ENCODE measurements at regions of chr15 and their contacts with region 1.

Region 1: DNA sequence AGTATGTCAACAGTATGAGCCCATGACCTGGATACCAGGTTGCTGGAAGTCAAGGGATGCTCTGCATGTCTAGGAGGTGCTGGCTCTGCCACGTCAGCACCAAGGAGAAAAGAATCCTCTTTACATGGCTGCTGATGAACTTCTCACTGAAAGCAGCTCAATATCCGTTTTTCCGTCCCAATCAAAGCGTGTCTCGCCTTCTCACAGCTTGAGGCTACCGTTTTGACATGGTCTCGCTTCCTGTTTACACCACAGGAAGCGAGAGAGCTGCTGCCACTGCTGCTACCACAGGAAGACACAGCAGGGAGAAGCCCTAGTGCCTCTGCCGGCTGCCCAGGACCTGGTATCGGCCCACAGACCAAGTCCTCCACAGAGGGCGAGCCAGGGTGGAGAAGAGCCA is 27.3 kb downstream of the STARD5 start:
- DNase-seq: peak; percentile 89
- H3K4me3 Mint-ChIP-seq: peak overlapping the region; percentile 99
- H3K27ac Mint-ChIP-seq: peak overlapping the region; percentile 99
- H3K4me1 Mint-ChIP-seq: peaks cover 80% of the 10 kb centered on the region
- H3K27me3 Mint-ChIP-seq: no peaks in the 10 kb centered on the region

Region 2: DNA sequence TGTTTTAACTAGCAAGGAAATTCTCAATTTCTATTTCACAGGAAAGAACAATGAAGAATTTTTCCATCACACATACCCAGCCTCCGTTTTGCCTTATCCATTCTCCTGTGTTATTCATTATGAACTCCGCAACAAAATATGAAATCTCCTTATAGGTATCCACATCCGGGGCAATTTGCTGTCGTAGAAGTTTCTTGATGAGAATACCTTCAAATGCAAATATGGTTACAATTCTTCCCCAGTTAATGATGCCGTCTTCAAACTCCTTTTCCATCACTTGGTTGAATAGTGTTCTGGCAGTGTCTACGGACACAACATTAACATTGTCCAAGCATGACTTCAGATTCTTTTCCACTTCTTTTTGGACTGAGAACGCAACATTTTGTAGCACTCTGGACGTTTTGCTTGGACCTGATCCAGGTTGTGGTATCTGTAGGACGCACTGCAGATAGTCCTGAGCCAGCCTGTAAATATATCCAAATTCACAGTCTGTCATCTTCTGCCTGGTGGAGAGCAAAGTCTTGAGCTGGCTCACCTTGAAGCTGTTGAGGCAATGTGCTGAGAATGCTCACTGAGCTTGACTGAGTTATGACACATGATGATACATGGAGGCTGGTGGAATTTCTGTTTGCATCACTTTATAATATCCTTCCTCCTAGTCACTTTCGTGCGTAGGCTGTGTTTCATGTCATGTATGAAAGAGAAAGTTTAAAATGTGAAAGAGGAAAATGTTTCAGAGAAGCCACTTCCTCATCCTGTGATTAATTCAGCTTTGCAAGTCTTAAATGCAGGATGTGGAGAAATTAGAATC is 1325.8 kb before region 1 on chr15 and contains the start of gene BCL2A1:
- CTCF ChIA-PET with region 1: no interaction called
- POLR2A ChIA-PET with region 1: no interaction called
- intact Hi-C with region 1: loop called (anchors 10 kb)
- DNase-seq: peak; percentile 88
- H3K4me3 Mint-ChIP-seq: peak within 1 kb of the TSS; percentile 96
- H3K27ac Mint-ChIP-seq: peak within 1 kb of the TSS; percentile 99
- H3K4me1 Mint-ChIP-seq: peaks cover 49% of the 10 kb centered on the region
- H3K27me3 Mint-ChIP-seq: no peaks in the 10 kb centered on the region
- total RNA-seq, gene BCL2A1: 110 to 111 TPM

Region 3: GRCh38 chr15:80804965-80805495 is 491.6 kb before region 1 on chr15:
- CTCF ChIA-PET with region 1: no interaction called
- POLR2A ChIA-PET with region 1: no interaction called
- intact Hi-C with region 1: loop called (anchors 10 kb)
- DNase-seq: peak; percentile 46
- H3K4me3 Mint-ChIP-seq: peak overlapping the region; percentile 11
- H3K27ac Mint-ChIP-seq: peak overlapping the region; percentile 55
- H3K4me1 Mint-ChIP-seq: peaks cover 26% of the 10 kb centered on the region
- H3K27me3 Mint-ChIP-seq: no peaks in the 10 kb centered on the region

Region 4: GRCh38 chr15:81023483-81024264 is 273.0 kb before region 1 on chr15:
- CTCF ChIA-PET with region 1: interaction called, 3 read pairs
- POLR2A ChIA-PET with region 1: interaction called, 4 read pairs
- intact Hi-C with region 1: loop called (anchors 1 kb)
- DNase-seq: peak; percentile 55
- H3K4me3 Mint-ChIP-seq: peak overlapping the region; percentile 48
- H3K27ac Mint-ChIP-seq: peak overlapping the region; percentile 95
- H3K4me1 Mint-ChIP-seq: peaks cover 35% of the 10 kb centered on the region
- H3K27me3 Mint-ChIP-seq: no peaks in the 10 kb centered on the region

Region 5: DNA sequence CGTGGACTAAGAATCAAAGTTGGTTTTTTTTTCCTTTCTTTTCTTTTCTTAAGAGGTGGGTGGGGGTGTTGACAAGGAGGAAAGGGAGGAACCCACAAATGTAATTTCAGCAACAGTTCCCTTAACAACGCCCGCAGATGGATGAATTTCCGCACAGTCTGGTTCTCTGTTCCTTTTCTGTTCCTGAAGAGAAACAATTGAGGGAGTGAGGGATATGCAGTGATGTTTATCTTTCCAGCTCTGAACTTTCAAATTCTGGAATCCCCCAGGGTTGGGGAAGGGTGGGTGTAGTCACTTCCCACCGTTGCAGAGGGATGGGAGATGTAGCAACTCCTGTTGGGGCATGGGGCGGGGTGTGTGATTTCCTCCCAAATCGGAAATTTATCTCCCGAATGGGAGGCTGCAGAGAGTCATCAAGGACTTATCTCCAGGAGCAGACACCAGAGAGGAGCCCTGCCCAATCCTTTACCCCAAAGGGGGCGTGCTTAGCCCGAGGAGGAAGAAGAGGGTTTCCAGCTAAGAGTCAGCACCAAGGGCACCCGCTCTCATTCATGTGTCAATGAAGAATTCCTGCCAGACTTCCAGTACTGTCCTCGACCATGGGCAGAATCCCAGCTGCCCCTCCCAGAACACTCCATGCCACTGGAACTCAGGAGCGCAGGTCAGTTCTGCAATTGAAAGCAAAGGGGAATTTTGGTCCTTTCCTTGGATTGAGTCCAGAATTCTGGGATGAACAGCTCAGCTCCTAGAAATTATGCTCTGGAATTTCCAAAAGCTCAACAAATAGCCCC is 197.6 kb before region 1 on chr15:
- CTCF ChIA-PET with region 1: no interaction called
- POLR2A ChIA-PET with region 1: no interaction called
- intact Hi-C with region 1: no loop called
- DNase-seq: no peak
- H3K4me3 Mint-ChIP-seq: no peak overlapping the region
- H3K27ac Mint-ChIP-seq: no peak overlapping the region
- H3K4me1 Mint-ChIP-seq: peaks cover 7% of the 10 kb centered on the region
- H3K27me3 Mint-ChIP-seq: peaks cover 40% of the 10 kb centered on the region

Region 6: GRCh38 chr15:81211376-81211775 is 85.3 kb before region 1 on chr15:
- CTCF ChIA-PET with region 1: no interaction called
- POLR2A ChIA-PET with region 1: no interaction called
- intact Hi-C with region 1: no loop called
- DNase-seq: no peak
- H3K4me3 Mint-ChIP-seq: no peak overlapping the region
- H3K27ac Mint-ChIP-seq: no peak overlapping the region
- H3K4me1 Mint-ChIP-seq: no peaks in the 10 kb centered on the region
- H3K27me3 Mint-ChIP-seq: peaks cover 15% of the 10 kb centered on the region

Region 7: DNA sequence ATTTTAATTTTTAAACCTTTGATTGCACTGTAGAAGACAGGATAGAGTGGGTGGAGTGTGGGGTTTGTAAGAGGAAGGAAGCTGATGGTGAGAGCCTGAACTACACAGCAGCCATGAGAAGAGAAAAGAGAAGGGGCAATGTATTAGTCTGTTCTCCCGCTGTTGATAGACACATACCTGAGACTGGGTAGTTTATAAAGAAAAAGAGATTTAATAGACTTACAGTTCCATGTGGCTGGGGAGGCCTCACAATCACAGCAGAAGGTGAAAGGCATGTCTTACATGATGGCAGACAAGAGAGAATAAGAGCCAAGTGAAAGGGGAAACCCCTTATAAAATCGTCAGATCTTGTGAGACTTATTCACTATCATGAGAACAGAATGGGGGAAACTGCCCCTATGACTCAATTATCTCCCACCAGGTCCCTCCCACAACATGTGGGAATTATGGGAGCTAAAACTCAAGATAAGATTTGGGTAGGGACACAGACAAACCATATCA is 10.0 kb before region 1 on chr15:
- CTCF ChIA-PET with region 1: interaction called, 7 read pairs
- POLR2A ChIA-PET with region 1: interaction called, 24 read pairs
- intact Hi-C with region 1: loop called (anchors 1 kb)
- DNase-seq: no peak
- H3K4me3 Mint-ChIP-seq: peak overlapping the region; percentile 58
- H3K27ac Mint-ChIP-seq: peak overlapping the region; percentile 88
- H3K4me1 Mint-ChIP-seq: peaks cover 68% of the 10 kb centered on the region
- H3K27me3 Mint-ChIP-seq: no peaks in the 10 kb centered on the region

Region 8: GRCh38 chr15:81323944-81324881 is 27.5 kb after region 1 on chr15 and contains the start of gene STARD5:
- CTCF ChIA-PET with region 1: interaction called, 6 read pairs
- POLR2A ChIA-PET with region 1: interaction called, 9 read pairs
- intact Hi-C with region 1: loop called (anchors 1 kb)
- DNase-seq: peak; percentile 98
- H3K4me3 Mint-ChIP-seq: peak within 1 kb of the TSS; percentile 100
- H3K27ac Mint-ChIP-seq: peak within 1 kb of the TSS; percentile 76
- H3K4me1 Mint-ChIP-seq: peaks cover 24% of the 10 kb centered on the region
- H3K27me3 Mint-ChIP-seq: no peaks in the 10 kb centered on the region
- total RNA-seq, gene STARD5: 7.3 to 9.1 TPM

Region 9: GRCh38 chr15:82046666-82047452 is 750.2 kb after region 1 on chr15:
- CTCF ChIA-PET with region 1: no interaction called
- POLR2A ChIA-PET with region 1: no interaction called
- intact Hi-C with region 1: loop called (anchors 5 kb)
- DNase-seq: peak; percentile 92
- H3K4me3 Mint-ChIP-seq: peak overlapping the region; percentile 82
- H3K27ac Mint-ChIP-seq: peak overlapping the region; percentile 80
- H3K4me1 Mint-ChIP-seq: peaks cover 12% of the 10 kb centered on the region
- H3K27me3 Mint-ChIP-seq: peaks cover 26% of the 10 kb centered on the region